Psoas muscle (tissue), 8 donors: ENCODE measurements at regions of chr10 and their contacts with region 1.

Region 1: DNA sequence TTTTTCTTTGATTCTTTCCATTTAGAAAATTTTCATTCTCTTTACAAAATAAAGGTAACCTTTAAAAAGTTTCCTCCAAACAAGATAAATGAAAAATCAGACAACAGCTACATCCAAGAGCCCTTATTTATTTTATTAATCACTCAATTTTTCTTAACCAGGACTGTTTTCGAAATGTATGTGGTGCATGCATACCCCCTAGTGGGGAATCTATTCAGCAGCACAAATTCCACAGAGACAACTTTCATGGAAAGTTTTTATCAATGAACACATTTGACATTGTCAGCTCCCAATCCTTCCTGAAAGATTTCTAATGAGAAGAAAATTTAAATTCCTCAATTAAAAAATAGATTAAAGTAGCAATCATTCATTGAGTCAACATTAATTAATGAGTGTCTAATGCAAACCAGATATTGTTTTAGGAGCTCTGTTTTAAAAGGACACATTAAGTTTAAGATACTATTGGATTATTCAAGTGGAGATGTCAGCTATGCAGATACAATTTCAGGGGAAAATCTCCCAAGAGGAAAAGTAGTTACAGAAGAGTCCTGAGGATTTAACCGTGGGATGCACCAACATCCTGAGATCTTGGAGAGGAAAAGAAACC is 5.2 kb upstream of the HTR7 start:
- DNase-seq: no peak
- ATAC-seq: no peak
- H3K4me3 ChIP-seq: no peak overlapping the region
- H3K27ac ChIP-seq: no peak overlapping the region
- H3K4me1 ChIP-seq: no peaks in the 10 kb centered on the region
- H3K27me3 ChIP-seq: peaks cover 0 to 3% (median 2%) of the 10 kb centered on the region in 3 donors
- CTCF ChIP-seq: peak; percentile 59

Region 2: DNA sequence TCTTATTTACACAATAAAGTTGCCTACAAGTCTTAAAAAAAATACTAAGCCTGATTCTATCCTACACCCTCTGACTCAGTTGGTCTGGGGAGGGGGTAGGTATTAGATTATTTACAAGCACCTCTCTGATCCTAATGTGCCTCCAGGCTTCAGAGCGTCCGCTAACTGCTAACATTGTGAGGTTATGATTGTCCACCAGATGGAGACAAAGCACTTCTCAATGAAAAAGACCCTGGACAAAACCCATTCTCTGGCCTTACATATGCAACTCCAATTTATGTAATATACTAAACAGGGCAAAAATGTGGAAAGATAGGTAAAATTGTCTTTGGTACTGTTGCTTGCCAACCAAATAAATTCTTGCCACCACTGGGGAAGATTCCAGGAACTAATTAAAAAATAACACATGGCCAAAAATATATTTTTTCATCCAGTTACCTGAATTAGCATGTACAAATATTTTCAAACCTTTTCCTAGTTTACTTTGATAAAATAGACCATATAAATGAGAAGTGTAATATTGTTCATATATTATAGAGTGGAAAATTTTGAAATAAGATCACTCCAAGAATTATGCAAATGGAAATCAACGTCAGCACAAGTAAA is 1069.3 kb before region 1 on chr10:
- intact Hi-C with region 1: loop called in 1 of 2 experiments (anchors 5 kb)
- DNase-seq: no peak
- ATAC-seq: peak in 2 of 4 donors; percentile 55 to 78
- H3K4me3 ChIP-seq: no peak overlapping the region
- H3K27ac ChIP-seq: no peak overlapping the region
- H3K4me1 ChIP-seq: no peaks in the 10 kb centered on the region
- H3K27me3 ChIP-seq: no peaks in the 10 kb centered on the region
- CTCF ChIP-seq: peak; percentile 77

Region 3: GRCh38 chr10:90741926-90742565 is 121.0 kb before region 1 on chr10:
- intact Hi-C with region 1: loop called in 1 of 2 experiments (anchors 5 kb)
- DNase-seq: no peak
- ATAC-seq: no peak
- H3K4me3 ChIP-seq: no peak overlapping the region
- H3K27ac ChIP-seq: no peak overlapping the region
- H3K4me1 ChIP-seq: no peaks in the 10 kb centered on the region
- H3K27me3 ChIP-seq: peaks cover 0 to 4% (median 3%) of the 10 kb centered on the region in 3 donors
- CTCF ChIP-seq: no peak

Region 4: DNA sequence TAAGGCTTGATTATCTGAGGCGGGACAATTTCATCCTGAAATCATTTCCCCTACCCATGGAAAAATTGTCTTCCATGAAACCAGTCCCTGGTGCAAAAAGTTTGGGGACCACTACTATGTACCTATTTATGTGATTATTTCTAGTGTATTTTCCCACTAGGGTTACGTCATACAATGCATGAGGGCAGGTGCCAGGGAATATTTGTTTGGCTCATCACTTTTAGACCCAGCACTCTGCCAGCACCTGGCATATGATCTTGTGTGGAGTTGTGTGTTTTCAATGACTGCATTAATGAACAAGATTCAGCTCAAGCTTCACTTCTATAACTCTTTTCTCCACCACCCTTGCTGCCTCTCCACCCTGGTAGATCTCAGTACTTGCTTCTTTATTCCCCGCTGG is 861.9 kb after region 1 on chr10:
- intact Hi-C with region 1: no loop called
- DNase-seq: no peak
- ATAC-seq: no peak
- H3K4me3 ChIP-seq: no peak overlapping the region
- H3K27ac ChIP-seq: no peak overlapping the region
- H3K4me1 ChIP-seq: no peaks in the 10 kb centered on the region
- H3K27me3 ChIP-seq: peaks cover 0 to 16% (median 6%) of the 10 kb centered on the region in 3 donors
- CTCF ChIP-seq: no peak

Region 5: GRCh38 chr10:92592761-92593618 is 1730.0 kb after region 1 on chr10 and contains the start of gene KIF11:
- intact Hi-C with region 1: loop called in 1 of 2 experiments (anchors 10 kb)
- DNase-seq: peak; percentile 98
- ATAC-seq: peak; percentile 90 to 94 (median 92)
- H3K4me3 ChIP-seq: peak within 1 kb of the TSS; percentile 91
- H3K27ac ChIP-seq: peak within 1 kb of the TSS; percentile 90
- H3K4me1 ChIP-seq: peaks cover 5% of the 10 kb centered on the region
- H3K27me3 ChIP-seq: no peaks in the 10 kb centered on the region
- CTCF ChIP-seq: no peak
- total RNA-seq, gene KIF11: 0.21 to 0.34 (median 0.27) TPM